RWPE1 (cell line): ENCODE measurements at regions of chr7 and their contacts with region 1.

Region 1: GRCh38 chr7:49324707-49325106 is 400.4 kb downstream of the CDC14C start:
- DNase-seq: peak; percentile 34
- H3K27ac ChIP-seq: no peak overlapping the region
- CTCF ChIP-seq: peak; percentile 38

Region 2: DNA sequence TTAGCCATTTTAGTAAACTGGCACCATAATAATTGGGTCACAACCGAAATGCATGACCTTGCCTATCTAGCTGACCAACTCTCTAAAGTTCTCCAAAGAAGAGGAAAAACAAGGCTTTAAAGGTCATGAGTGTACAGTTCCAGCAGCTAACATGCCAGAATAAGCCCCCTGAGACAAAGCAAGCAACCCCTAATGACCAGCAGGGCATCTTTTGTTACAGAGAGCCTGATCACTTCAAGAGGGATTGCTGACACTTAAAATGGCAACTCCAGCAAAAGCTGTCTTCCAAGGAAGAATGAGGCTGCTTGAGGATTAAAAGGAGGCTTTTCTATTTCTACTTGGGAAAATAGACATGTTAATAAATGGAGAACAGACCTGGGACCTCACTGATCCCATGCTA is 186.7 kb before region 1 on chr7:
- CTCF ChIA-PET with region 1: no interaction called
- POLR2A ChIA-PET with region 1: no interaction called
- DNase-seq: no peak
- H3K27ac ChIP-seq: no peak overlapping the region
- CTCF ChIP-seq: no peak

Region 3: GRCh38 chr7:49264530-49264929 is 60.2 kb before region 1 on chr7:
- CTCF ChIA-PET with region 1: interaction called, 18 read pairs
- POLR2A ChIA-PET with region 1: no interaction called
- DNase-seq: no peak
- H3K27ac ChIP-seq: no peak overlapping the region
- CTCF ChIP-seq: no peak